Common myeloid progenitor, CD34-positive (primary cell): ENCODE measurements at regions of chr14 and their contacts with region 1.

Region 1: DNA sequence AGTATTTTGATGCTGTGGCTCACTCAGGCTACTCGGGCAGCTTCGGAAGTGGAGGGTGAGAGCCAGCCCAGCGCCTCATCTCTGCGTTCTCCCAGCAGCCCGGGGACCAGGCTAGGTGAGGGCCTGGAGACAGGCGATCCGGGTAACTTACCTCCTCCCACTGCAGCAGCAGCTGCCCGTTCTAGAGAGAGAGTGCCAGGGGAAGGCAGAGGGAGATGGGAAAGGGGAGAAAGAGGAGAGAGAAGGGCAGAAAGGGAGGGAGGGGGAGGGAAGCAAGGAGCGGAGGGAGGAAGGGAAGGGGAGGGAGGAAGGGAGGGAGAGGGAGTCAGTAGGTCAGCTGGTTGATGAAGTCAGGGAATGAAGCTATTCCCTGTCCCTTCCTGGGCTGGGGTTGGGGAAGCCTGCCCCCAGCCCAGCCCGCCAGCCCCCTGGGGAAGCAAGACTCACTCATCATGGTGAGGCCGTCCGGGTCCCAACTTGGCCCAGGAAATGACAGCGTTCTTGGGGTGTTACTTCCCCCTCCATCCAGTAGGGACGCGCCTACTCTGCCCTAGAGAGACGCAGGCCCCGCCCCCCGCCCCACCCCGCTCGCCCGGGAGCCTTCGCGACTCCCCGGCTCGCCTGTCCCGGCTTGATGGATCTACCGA is at the start of gene IFI27L2:
- DNase-seq: peak; percentile 61 to 78 (median 72)
- H3K4me3 ChIP-seq: peak within 1 kb of the TSS; percentile 9 to 87 (median 64)
- H3K27ac ChIP-seq: peak within 1 kb of the TSS in 1 of 2 experiments; percentile 25
- H3K4me1 ChIP-seq: peaks cover 0 to 16% (median 14%) of the 10 kb centered on the region in 4 experiments
- H3K27me3 ChIP-seq: peaks cover 0 to 6% (median 0%) of the 10 kb centered on the region in 5 experiments

Region 2: DNA sequence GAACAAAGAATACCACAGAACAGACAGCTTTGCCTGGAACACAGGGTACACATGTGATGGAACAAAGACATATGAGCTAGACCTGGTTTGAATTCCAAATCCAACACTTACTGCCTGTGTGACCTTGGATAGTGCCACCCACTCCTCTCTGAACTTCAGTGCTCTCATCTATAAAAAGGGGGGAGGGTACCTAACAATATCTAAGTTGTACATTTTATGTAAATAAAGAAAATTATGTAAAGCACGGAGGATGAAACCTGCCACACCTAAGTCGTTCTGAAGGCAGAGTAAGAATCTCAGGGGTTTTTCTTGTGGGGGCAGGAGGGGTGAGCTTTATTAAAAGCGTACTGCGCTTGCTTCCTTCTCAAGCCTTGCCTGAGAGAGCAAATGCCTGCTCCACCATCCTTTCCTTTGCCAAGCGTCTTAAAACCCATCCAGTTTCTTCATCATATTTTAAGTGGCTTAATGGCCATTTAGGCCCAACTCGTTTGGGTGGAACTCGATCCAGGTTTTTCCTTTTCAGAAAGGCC is 49.3 kb before region 1 on chr14:
- CTCF ChIA-PET with region 1: interaction called, 10 read pairs
- POLR2A ChIA-PET with region 1: no interaction called
- DNase-seq: peak in 2 of 3 donors; percentile 19 to 22
- H3K4me3 ChIP-seq: peak overlapping the region; percentile 88 to 95 (median 91)
- H3K27ac ChIP-seq: peak overlapping the region; percentile 77 to 92
- H3K4me1 ChIP-seq: peaks cover 12 to 39% (median 26%) of the 10 kb centered on the region in 4 experiments
- H3K27me3 ChIP-seq: no peaks in the 10 kb centered on the region

Region 3: GRCh38 chr14:94143239-94143638 is 14.0 kb after region 1 on chr14:
- CTCF ChIA-PET with region 1: interaction called, 25 read pairs
- POLR2A ChIA-PET with region 1: no interaction called
- DNase-seq: peak in 1 of 3 donors; percentile 17
- H3K4me3 ChIP-seq: no peak overlapping the region
- H3K27ac ChIP-seq: no peak overlapping the region
- H3K4me1 ChIP-seq: peaks cover 0 to 10% (median 3%) of the 10 kb centered on the region in 4 experiments
- H3K27me3 ChIP-seq: no peaks in the 10 kb centered on the region

Region 4: GRCh38 chr14:94180655-94181271 is 51.5 kb after region 1 on chr14:
- CTCF ChIA-PET with region 1: interaction called, 41 read pairs
- POLR2A ChIA-PET with region 1: no interaction called
- DNase-seq: peak; percentile 60 to 81 (median 80)
- H3K4me3 ChIP-seq: peak overlapping the region in 3 of 7 experiments; percentile 27 to 73 (median 29)
- H3K27ac ChIP-seq: no peak overlapping the region
- H3K4me1 ChIP-seq: no peaks in the 10 kb centered on the region
- H3K27me3 ChIP-seq: peaks cover 10 to 38% (median 18%) of the 10 kb centered on the region in 5 experiments

Region 5: GRCh38 chr14:94342334-94342934 is 213.2 kb after region 1 on chr14:
- CTCF ChIA-PET with region 1: no interaction called
- POLR2A ChIA-PET with region 1: no interaction called
- DNase-seq: peak; percentile 63 to 80 (median 79)
- H3K4me3 ChIP-seq: no peak overlapping the region
- H3K27ac ChIP-seq: no peak overlapping the region
- H3K4me1 ChIP-seq: peaks cover 0 to 3% (median 0%) of the 10 kb centered on the region in 4 experiments
- H3K27me3 ChIP-seq: peaks cover 0 to 5% (median 0%) of the 10 kb centered on the region in 5 experiments

Region 6: DNA sequence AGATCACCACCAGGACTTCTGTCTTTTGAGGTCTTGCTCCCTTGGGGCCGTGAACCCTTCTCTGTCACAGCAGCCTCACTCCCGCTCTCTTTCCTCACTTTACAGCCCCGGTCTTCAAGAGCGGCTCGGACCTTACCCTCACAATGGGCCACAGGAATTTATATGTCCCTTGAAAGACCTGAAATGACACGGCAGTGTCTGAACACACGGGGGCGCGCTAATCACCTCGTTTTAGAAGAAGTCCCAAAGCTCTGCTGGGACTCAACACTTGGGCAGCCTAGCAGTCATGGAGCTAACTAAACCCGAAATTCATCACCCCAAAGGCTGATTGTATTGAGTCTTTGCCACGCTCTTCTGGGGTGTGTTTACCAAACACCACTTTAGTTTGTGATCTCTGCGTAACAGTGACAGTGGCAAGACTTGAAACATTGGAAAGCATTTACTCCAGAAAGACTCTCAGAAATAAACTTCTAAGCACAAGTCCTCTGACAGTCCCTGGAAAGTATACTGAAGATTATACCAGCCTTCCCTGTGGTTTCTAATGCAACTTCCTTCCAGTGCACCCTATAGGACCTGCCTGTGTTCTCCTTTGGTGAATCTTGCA is 294.3 kb after region 1 on chr14:
- CTCF ChIA-PET with region 1: no interaction called
- POLR2A ChIA-PET with region 1: no interaction called
- DNase-seq: peak; percentile 39 to 63 (median 51)
- H3K4me3 ChIP-seq: no peak overlapping the region
- H3K27ac ChIP-seq: no peak overlapping the region
- H3K4me1 ChIP-seq: no peaks in the 10 kb centered on the region
- H3K27me3 ChIP-seq: peaks cover 3 to 14% (median 5%) of the 10 kb centered on the region in 5 experiments